PC-9 (cell line): ENCODE measurements at regions of chr6 and their contacts with region 1.

Region 1: DNA sequence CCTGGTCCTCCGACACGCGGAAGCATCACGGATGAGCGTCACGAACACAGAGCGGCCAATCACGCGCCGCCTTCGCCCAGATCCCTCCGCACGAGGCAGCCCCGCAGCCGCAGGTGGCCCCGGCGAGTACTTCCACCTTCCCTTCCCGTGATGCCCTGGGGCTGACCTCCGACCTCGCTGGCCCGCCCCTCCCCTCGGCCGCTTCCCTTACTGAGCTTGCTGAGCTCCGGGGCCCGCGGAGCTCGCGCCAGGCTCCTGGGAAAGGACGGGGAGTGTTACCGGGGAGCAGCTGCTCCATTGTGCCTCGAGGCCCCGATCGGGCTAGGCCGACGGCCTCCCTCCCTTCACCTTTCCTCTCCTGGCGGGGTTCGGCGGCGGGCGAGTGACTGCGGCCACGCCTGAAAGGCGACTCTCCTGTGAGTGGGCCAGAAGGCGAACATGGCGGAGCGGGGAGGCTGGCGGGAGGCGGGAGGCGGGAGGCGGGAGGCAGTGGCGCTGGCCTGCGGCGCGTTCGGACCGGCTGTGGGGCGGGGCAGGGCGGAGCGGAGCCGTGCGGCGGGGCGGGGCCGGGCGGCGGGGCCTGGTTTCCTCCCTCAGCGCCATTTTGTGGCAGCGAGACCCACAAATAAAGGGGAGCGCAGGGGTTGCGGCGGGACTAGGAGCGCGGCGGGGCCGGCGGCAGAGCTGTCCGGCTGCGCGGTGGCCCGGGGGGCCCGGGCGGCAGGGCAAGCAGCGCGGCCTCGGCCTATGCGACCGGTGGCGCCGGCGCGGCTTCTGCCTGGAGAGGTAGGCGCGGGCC is at the start of gene WTAP:
- DNase-seq: peak; percentile 87 to 90
- H3K4me3 ChIP-seq: peak within 1 kb of the TSS; percentile 69
- H3K27ac ChIP-seq: peak within 1 kb of the TSS; percentile 91
- H3K4me1 ChIP-seq: peaks cover 17% of the 10 kb centered on the region
- H3K27me3 ChIP-seq: no peaks in the 10 kb centered on the region
- CTCF ChIP-seq: no peak
- total RNA-seq, gene WTAP: 44.7 and 46.5 TPM in 2 replicates

Region 2: DNA sequence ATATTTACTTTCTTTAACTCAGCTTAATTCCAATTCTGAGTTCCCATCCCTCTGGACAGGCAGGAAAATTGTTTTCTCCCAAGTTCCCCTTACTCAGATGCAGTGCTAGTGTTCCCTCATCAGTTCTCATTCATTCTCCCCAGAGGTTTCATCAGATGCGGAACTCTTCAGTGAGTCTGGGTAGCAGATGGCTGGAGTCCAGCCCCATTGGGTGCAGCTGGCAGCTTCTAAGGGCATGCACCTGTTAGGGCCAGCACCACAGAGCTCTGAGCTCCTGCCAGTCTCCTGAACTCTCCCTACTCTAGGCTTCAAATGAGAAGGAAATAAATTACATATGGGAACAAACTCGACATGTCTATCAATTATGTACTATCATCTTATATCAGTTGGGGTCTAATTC is 110.7 kb before region 1 on chr6:
- CTCF ChIA-PET with region 1: no interaction called
- POLR2A ChIA-PET with region 1: no interaction called
- intact Hi-C with region 1: no loop called
- DNase-seq: no peak
- H3K4me3 ChIP-seq: no peak overlapping the region
- H3K27ac ChIP-seq: no peak overlapping the region
- H3K4me1 ChIP-seq: no peaks in the 10 kb centered on the region
- H3K27me3 ChIP-seq: peaks cover 45% of the 10 kb centered on the region
- CTCF ChIP-seq: no peak

Region 3: DNA sequence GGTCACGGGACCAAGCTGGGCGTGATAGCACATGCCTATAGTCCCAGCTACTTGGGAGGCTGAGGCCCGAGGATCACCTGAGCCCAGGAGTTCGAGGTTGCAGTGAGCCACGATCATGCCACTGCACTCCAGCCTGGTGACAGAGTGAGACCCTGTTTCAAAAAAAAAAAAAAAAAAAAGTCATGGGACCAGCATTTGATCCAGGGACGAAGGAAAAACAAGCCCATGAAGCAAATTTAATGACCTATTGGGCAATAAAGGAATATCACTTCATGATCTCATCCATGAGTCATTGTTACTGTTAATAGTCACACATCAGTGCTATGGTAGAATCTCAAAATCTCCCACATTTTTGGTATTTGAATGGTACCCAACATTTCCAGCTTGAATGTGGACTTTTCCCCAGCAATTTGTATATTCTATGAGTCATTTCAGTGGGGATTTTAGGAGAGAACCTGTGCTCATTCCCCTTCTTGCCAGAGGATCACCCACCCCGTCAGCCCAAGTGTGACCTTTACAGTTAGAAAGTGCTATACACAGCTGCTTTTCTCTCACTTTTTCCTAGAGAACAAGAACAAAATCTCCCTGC is 25.6 kb before region 1 on chr6:
- CTCF ChIA-PET with region 1: interaction called, 5 read pairs
- POLR2A ChIA-PET with region 1: interaction called, 10 read pairs
- intact Hi-C with region 1: no loop called
- DNase-seq: peak in 1 of 2 experiments; percentile 72
- H3K4me3 ChIP-seq: no peak overlapping the region
- H3K27ac ChIP-seq: peak overlapping the region; percentile 51
- H3K4me1 ChIP-seq: peaks cover 19% of the 10 kb centered on the region
- H3K27me3 ChIP-seq: no peaks in the 10 kb centered on the region
- CTCF ChIP-seq: no peak

Region 4: DNA sequence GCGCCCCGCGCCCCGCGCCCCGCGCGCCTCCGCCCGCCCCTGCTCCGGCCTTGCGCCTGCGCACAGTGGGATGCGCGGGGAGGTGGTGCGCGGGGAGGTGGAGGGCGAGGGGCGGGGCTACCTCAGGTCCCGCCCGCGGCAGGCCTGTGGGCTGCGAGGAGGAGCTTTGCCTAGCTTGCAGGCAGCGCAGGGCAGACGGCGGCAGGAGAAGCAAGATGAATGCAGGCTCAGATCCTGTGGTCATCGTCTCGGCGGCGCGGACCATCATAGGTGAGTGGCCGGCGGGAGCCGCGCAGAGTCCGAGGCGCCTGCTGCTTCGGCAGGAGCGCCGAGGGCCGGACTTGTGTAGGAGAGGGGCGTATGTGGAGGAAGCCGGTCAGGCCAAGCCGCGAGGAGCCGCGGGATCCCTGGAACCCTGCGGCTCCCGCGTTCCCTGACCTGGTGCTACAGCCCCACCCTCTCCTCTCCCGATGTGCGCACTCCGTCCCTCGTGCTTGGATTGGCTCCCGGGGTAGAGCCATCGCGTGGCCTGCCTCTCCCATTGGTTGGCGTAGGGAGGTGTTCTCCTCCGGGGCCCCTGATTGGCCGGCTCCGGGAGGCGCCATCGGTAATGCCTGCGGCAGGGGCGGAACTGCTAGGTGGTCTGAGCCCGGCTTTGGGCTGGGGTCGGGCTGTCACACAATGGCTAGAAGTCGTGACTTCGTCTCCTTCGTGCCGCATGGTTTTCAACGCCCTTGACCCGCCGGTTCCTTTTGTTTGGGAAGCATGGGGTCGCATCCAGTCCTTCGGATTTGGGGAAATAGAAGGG is 35.0 kb after region 1 on chr6 and contains the start of gene ACAT2:
- CTCF ChIA-PET with region 1: no interaction called
- POLR2A ChIA-PET with region 1: no interaction called
- intact Hi-C with region 1: loop called (anchors 1 kb)
- DNase-seq: peak; percentile 87 to 89
- H3K4me3 ChIP-seq: peak within 1 kb of the TSS; percentile 98
- H3K27ac ChIP-seq: peak within 1 kb of the TSS; percentile 79
- H3K4me1 ChIP-seq: peaks cover 14% of the 10 kb centered on the region
- H3K27me3 ChIP-seq: no peaks in the 10 kb centered on the region
- CTCF ChIP-seq: no peak
- total RNA-seq, gene ACAT2: 48.5 and 71.0 TPM in 2 replicates